Activated CD4-positive, alpha-beta T cell treated with anti-CD3 and anti-CD28 coated beads, Interleukin-2, amount 10 ng/mL, durations not matched to agents 24 days and 14 days (primary cell): ENCODE measurements at regions of chr14 and their contacts with region 1.

Region 1: DNA sequence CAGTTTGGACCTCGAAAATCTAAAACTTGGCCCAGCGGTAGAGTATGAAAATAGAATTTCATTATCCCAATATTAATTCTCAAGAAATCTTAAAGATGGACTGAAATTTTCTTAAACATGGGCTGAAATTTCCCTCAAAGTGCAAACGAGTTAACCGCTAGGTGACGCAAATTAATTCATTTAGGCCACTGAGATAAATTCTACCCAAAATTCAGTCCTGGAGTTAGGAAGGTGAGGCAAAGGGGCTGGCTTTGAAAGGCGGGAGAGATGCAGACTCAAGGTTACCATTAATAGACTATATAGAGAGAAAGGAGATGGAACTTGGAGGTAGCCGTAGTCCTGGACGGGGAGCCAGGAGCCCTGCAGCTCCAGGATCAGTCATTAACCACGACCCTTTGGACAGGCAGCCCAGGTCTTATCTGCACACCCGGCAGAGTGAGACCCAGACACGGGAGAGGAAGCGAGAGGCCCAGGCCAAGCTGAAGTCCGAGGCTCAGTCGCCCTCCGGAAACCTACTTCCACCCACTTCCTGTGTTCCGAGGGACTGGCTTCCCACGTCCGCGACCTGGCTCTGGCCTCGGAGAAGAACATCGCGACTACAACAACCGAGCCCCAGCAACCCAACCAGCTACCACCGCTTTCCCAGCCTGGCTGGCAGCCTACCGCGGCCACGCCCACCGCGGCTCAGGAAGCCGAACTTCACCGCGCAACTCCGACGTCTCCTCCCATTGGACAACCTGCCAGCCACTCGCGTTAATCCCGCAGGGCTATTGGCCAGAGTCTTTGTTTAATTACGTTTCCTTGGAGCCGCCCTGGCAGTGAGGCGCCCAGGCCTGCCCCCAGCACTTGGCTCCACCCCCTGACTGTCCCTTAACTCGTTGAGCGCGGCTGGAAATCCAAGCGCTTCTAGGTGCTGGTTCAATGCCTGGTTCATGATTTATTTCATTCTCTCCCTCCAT is at the start of gene EFCAB11:
- DNase-seq: peak; percentile 99
- H3K4me3 Mint-ChIP-seq: peak within 1 kb of the TSS; percentile 90
- H3K27ac Mint-ChIP-seq: peak within 1 kb of the TSS; percentile 90
- H3K4me1 Mint-ChIP-seq: peaks cover 40% of the 10 kb centered on the region
- H3K27me3 Mint-ChIP-seq: no peaks in the 10 kb centered on the region
- total RNA-seq, gene EFCAB11: 6.8 and 7.8 TPM in 2 replicates

Region 2: DNA sequence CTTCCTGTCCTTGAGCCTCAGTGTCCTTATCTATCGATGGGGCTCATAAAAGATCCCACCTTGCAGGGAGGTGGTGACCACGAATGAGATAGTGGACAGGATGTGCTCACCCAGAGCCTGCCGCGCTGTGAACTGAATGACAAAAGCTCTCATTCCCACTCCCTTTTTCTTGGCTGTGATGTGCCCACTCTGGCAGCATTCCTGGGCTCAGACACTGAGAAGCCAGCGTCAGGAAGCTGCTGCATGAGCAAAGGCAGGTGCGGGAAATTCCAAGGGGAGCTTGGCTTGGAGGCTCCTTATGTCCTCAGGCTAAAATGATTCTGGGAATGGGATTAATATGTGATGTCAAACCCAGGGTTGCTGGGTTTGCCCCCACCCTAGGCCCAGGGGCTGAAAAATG is 61.4 kb before region 1 on chr14:
- intact Hi-C with region 1: no loop called
- DNase-seq: no peak
- H3K4me3 Mint-ChIP-seq: no peak overlapping the region
- H3K27ac Mint-ChIP-seq: no peak overlapping the region
- H3K4me1 Mint-ChIP-seq: no peaks in the 10 kb centered on the region
- H3K27me3 Mint-ChIP-seq: no peaks in the 10 kb centered on the region

Region 3: GRCh38 chr14:90256354-90257131 is 302.2 kb after region 1 on chr14 and contains the start of gene PSMC1:
- intact Hi-C with region 1: loop called (anchors 2 kb)
- DNase-seq: peak; percentile 96
- H3K4me3 Mint-ChIP-seq: peak within 1 kb of the TSS; percentile 93
- H3K27ac Mint-ChIP-seq: peak within 1 kb of the TSS; percentile 96
- H3K4me1 Mint-ChIP-seq: peaks cover 27% of the 10 kb centered on the region
- H3K27me3 Mint-ChIP-seq: peaks cover 4% of the 10 kb centered on the region
- total RNA-seq, gene PSMC1: 170 and 185 TPM in 2 replicates